Endothelial cell of umbilical vein (primary cell): ENCODE measurements at regions of chr17 and their contacts with region 1.

Region 1: DNA sequence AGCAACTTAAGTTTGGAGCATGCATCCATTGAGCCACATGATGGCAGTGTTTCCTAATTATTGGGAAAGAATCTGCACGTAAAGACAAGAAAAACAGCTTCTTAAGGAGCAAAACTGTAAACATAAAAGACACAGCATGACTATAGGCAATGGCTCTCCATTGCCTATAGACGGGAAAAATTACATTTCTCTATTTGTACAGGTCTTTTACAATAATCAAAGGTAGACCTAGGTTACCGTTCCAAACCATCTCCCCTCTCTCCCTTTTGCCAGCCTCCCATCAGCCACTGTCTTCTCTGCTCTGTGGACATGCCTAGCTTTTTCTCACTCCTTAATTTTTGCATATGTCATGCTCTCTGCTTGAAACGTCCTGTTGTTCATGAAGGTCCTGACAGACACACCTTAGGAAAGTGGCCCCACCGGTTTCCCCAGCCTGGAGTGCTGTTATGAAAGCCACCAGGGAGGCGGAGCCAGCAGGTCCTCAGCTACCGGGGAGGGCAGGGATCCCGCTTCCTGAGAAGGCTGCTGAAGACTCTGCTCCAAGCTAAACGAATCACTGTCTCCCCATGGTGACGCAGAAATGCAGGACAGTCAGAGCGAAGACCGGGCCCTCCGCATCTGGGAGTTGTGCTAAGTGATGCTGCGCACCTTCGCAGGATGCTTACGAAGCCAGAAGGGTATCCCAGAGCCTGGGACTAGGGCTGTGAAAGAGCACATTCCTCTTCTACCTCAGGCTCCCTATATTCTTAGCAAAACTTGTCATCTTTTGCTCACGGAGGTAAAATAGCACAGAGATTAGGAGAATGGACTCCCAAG is 2.2 kb upstream of the SLC16A11 start:
- DNase-seq: peak; percentile 89
- H3K4me3 ChIP-seq: no peak overlapping the region
- H3K27ac ChIP-seq: no peak overlapping the region
- H3K4me1 ChIP-seq: peaks cover 27% of the 10 kb centered on the region
- H3K27me3 ChIP-seq: no peaks in the 10 kb centered on the region
- CTCF ChIP-seq: peak; percentile 52 to 58
- POLR2A ChIP-seq: no peak

Region 2: DNA sequence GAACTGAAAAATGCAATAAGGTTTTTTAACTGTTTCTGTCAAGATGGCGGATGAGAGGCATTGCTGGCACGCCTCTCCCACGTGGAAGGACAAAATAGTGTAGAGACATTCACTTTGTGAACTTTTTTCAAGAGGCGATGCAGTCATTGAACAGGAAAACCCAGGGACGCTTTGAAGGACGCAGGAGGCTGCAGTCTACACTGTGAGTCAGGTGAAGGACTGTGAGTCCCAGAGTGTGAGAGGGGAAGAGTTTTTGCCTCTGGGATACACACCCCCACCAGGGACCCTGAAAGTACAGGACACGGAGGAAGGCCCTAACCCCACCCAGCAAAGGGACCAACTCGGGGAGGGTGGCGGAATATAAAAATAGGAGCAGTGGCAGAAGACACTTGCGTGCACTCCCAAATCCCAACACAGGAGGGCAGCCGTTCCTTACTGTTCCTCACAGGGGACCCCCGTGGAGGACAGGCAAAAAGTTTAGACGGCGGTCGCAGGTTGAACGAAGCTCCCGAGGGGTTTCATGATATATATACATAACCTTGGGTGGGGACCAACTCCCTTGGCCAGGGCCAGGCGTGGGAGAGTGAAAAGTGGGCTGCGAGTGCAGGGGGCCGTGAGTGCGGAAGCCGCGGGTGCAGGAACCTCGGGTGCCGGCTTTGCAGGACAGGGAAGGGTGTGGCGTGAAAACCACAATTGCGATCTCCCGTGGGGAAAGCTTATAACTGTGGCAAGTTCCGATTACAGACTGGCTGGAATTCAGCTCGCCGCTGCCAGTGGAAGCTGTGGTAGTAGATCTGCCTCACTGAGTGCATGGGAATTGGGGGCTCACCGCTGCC is 132.3 kb before region 1 on chr17:
- CTCF ChIA-PET with region 1: interaction called, 32 read pairs
- POLR2A ChIA-PET with region 1: no interaction called
- dilution Hi-C with region 1: no loop called
- intact Hi-C with region 1: no loop called
- DNase-seq: peak; percentile 62
- H3K4me3 ChIP-seq: no peak overlapping the region
- H3K27ac ChIP-seq: no peak overlapping the region
- H3K4me1 ChIP-seq: peaks cover 5% of the 10 kb centered on the region
- H3K27me3 ChIP-seq: peaks cover 36 to 42% of the 10 kb centered on the region in 2 experiments
- CTCF ChIP-seq: peak; percentile 82 to 84
- POLR2A ChIP-seq: no peak

Region 3: GRCh38 chr17:7136266-7136877 is 90.3 kb after region 1 on chr17:
- CTCF ChIA-PET with region 1: interaction called, 223 read pairs
- POLR2A ChIA-PET with region 1: interaction called, 6 read pairs
- dilution Hi-C with region 1: no loop called
- intact Hi-C with region 1: loop called (anchors 1 kb)
- DNase-seq: peak; percentile 73
- H3K4me3 ChIP-seq: no peak overlapping the region
- H3K27ac ChIP-seq: no peak overlapping the region
- H3K4me1 ChIP-seq: peaks cover 18% of the 10 kb centered on the region
- H3K27me3 ChIP-seq: peaks cover 0 to 1% of the 10 kb centered on the region in 2 experiments
- CTCF ChIP-seq: peak; percentile 79 to 89
- POLR2A ChIP-seq: no peak

Region 4: GRCh38 chr17:7177196-7177953 is 131.3 kb after region 1 on chr17:
- CTCF ChIA-PET with region 1: interaction called, 91 read pairs
- POLR2A ChIA-PET with region 1: no interaction called
- dilution Hi-C with region 1: no loop called
- intact Hi-C with region 1: loop called (anchors 1 kb)
- DNase-seq: peak; percentile 74
- H3K4me3 ChIP-seq: peak overlapping the region; percentile 30 to 66 (median 46)
- H3K27ac ChIP-seq: peak overlapping the region; percentile 63
- H3K4me1 ChIP-seq: peaks cover 17% of the 10 kb centered on the region
- H3K27me3 ChIP-seq: no peaks in the 10 kb centered on the region
- CTCF ChIP-seq: peak; percentile 81 to 95
- POLR2A ChIP-seq: peak; percentile 28

Region 5: GRCh38 chr17:7219812-7220581 is 173.9 kb after region 1 on chr17 and contains the starts of genes ACADVL and DLG4:
- CTCF ChIA-PET with region 1: interaction called, 28 read pairs
- POLR2A ChIA-PET with region 1: interaction called, 3 read pairs
- dilution Hi-C with region 1: no loop called
- intact Hi-C with region 1: no loop called
- DNase-seq: peak; percentile 85
- H3K4me3 ChIP-seq: peak within 1 kb of the TSS; percentile 51 to 69 (median 61)
- H3K27ac ChIP-seq: peak within 1 kb of the TSS; percentile 71
- H3K4me1 ChIP-seq: peaks cover 29% of the 10 kb centered on the region
- H3K27me3 ChIP-seq: no peaks in the 10 kb centered on the region
- CTCF ChIP-seq: no peak
- POLR2A ChIP-seq: peak; percentile 83
- total RNA-seq, gene ACADVL: 300 and 308 TPM in 2 replicates
- total RNA-seq, gene DLG4: 26.6 and 34.6 TPM in 2 replicates

Region 6: DNA sequence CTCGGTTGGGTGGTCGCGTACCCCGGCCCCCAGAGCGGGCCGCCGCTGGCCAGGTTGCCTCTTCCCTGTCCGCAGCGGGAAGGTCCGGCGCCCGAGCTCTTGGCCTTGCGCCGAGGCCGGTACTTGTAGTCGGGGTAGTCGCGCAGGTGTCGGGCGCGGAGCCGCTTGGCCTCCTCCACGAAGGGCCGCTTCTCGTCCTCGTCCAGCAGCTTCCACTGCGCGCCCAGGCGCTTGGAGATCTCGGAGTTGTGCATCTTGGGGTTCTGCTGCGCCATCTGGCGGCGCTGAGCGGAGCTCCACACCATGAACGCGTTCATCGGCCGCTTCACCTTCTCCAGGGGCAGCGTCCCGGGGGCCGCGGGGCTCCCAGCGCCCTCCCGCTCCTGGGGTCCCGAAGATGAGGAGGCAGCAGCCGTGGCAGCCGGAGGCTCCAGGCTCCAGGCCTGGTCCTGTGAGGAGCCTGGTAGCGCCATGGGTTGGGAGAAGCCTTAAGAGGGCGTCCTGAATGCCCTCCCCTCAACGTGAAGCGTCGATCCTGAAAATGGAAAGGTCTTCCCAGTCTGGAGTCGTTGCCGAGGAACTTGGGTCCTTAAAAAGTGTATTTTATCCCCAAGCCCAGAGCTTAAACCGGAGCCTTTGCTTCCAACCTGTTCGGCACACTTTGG is 543.2 kb after region 1 on chr17:
- CTCF ChIA-PET with region 1: interaction called, 11 read pairs
- POLR2A ChIA-PET with region 1: no interaction called
- dilution Hi-C with region 1: no loop called
- intact Hi-C with region 1: no loop called
- DNase-seq: peak; percentile 78
- H3K4me3 ChIP-seq: no peak overlapping the region
- H3K27ac ChIP-seq: no peak overlapping the region
- H3K4me1 ChIP-seq: peaks cover 16% of the 10 kb centered on the region
- H3K27me3 ChIP-seq: no peaks in the 10 kb centered on the region
- CTCF ChIP-seq: peak; percentile 94 to 95
- POLR2A ChIP-seq: no peak